HCT116 (cell line): ENCODE measurements at regions of chr12 and their contacts with region 1.

Region 1: DNA sequence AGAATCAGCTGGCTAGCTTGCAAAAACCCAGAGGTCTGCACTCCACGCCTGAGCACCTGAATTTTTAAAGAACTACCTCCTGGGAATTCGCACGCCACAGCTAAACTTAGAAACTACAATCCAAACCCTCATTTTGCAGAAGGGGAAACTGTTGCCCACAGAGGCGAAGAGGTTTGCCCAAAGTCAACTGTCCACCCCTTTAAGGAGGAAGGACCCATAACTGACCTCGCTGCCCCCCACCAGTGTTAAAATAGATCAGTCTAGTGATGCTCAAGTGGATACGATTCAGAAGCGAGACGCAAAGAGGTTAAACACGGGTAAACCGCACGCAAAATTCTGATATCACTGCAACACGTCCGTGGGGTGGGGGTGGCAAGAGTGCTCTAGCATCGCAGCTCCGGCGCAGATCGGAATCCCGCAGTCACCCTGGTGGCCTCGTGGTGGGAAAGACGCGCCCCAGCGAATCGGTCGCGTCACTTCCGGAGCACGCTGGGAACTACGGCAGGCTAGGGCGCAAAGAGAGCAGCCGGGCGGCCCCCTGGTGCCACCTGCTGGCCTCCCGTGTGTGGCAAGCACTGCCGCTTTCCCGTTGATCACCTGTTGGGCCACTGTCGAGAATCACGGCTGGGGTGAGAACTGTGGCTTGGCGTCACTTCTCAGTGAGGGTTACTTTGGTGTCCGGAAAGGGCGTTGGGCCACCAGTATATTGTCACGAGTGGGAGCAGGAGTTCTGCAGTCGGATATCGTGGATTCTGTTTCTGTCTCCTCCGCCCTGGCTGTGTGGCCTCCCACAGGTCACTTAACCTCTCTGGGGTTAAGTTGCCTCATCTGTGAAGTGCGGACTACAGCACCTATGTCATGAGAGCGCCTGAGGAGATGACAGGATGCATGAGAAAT is at the start of gene ALKBH2:
- DNase-seq: peak; percentile 88
- ATAC-seq: peak; percentile 71
- H3K4me3 ChIP-seq: peak within 1 kb of the TSS; percentile 57 to 66
- H3K27ac ChIP-seq: peak within 1 kb of the TSS; percentile 40
- H3K4me1 ChIP-seq: peaks cover 13 to 34% of the 10 kb centered on the region in 2 experiments; a peak in 3 of 4 replicates
- H3K27me3 ChIP-seq: no peaks in the 10 kb centered on the region
- CTCF ChIP-seq: peak; percentile 86 to 96 (median 89)
- POLR2A ChIP-seq: peak; percentile 97
- RAD21 ChIP-seq: peak; percentile 99
- total RNA-seq, gene ALKBH2: 35.8 TPM

Region 2: GRCh38 chr12:108664338-108665258 is 428.7 kb before region 1 on chr12:
- CTCF ChIA-PET with region 1: no interaction called
- POLR2A ChIA-PET with region 1: no interaction called
- RAD21 ChIA-PET with region 1: no interaction called
- intact Hi-C with region 1: loop called (anchors 2 kb)
- DNase-seq: peak; percentile 87
- ATAC-seq: peak; percentile 99
- H3K4me3 ChIP-seq: no peak overlapping the region
- H3K27ac ChIP-seq: peak overlapping the region; percentile 15; the same call in 1 of the 2 replicates
- H3K4me1 ChIP-seq: peaks cover 8 to 20% of the 10 kb centered on the region in 2 experiments
- H3K27me3 ChIP-seq: no peaks in the 10 kb centered on the region
- CTCF ChIP-seq: peak; percentile 87 to 94 (median 90)
- POLR2A ChIP-seq: no peak
- RAD21 ChIP-seq: peak; percentile 99

Region 3: DNA sequence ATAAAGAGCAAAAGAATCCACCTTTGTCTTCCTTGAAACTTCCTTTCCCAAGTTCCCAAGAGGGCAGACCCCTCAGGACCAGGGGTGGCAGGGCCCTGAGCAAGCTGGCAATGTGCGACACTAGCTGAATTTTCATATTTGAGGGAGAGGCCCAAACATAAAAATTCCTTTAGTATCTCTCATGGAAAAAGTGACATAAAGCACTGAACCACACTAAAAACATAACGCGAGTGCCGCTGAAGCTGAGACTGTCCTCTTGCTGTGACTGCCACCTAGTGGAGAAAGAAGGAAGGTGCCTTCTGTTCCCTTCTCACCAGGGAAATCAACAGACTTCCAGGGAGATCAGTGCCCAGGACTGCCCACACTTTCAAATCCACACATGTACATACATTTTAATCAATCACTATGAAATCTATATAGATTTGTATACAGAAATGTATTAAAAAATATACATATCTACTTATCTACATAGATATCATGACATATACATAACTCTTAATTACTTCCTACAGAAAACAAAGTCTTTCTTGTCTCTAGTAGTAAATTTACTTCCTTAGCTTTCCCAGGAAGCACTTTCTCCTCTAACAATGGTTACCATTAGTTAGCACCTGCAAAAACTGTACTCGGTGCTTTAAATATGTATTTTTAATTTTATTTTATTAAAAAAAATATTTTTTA is 289.7 kb before region 1 on chr12:
- CTCF ChIA-PET with region 1: no interaction called
- POLR2A ChIA-PET with region 1: no interaction called
- RAD21 ChIA-PET with region 1: no interaction called
- intact Hi-C with region 1: loop called (anchors 10 kb)
- DNase-seq: peak; percentile 69
- ATAC-seq: peak; percentile 88
- H3K4me3 ChIP-seq: no peak overlapping the region
- H3K27ac ChIP-seq: peak overlapping the region; percentile 12; the same call in 1 of the 2 replicates
- H3K4me1 ChIP-seq: peaks cover 6 to 11% of the 10 kb centered on the region in 2 experiments; a peak in 3 of 4 replicates
- H3K27me3 ChIP-seq: no peaks in the 10 kb centered on the region
- CTCF ChIP-seq: peak; percentile 88 to 91 (median 88)
- POLR2A ChIP-seq: no peak
- RAD21 ChIP-seq: peak; percentile 95

Region 4: DNA sequence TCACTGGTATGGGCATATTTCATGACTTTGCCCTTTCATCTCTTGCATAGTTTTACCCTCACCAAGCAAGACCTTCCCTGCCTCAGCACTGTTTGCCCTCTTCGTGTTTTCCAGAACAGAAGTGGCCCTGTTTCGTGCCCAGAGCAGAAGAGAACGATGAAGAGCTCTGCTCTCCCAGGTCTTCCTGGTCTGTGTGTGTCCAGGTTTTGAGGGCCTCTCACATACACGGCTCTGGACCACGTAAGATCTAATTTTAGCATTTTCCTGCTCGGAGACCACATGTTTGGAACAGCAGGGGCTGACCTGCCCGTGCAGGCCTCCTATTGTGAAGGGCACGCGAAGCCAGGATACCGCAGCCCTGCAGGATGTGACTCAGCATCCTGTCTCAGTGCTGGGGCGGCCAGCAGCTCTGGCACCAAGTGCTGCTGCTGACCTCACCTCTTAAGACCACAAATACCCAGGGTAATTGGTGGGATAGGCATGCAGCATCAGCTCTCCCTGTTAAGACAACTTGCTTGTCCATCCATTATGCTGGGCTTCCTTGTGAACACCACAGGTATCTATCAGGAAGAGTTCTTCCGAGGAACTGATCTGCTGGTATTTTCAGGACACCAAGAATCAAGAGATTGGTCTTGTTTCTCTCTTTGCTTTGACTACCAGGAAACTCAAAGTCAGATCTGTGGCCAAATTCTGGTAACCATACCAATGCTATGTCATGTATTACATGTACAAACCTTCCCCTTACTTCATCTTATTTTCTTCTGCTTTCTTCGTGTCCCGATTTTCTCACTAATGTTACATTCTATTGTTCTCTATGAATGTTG is 254.9 kb before region 1 on chr12:
- CTCF ChIA-PET with region 1: no interaction called
- POLR2A ChIA-PET with region 1: no interaction called
- RAD21 ChIA-PET with region 1: no interaction called
- intact Hi-C with region 1: loop called (anchors 10 kb)
- DNase-seq: peak; percentile 97
- ATAC-seq: peak; percentile 85
- H3K4me3 ChIP-seq: peak overlapping the region in 1 of 2 experiments; percentile 11; a peak in 2 of 4 replicates
- H3K27ac ChIP-seq: peak overlapping the region; percentile 99
- H3K4me1 ChIP-seq: peaks cover 78 to 95% of the 10 kb centered on the region in 2 experiments
- H3K27me3 ChIP-seq: no peaks in the 10 kb centered on the region
- CTCF ChIP-seq: no peak
- POLR2A ChIP-seq: no peak
- RAD21 ChIP-seq: no peak

Region 5: DNA sequence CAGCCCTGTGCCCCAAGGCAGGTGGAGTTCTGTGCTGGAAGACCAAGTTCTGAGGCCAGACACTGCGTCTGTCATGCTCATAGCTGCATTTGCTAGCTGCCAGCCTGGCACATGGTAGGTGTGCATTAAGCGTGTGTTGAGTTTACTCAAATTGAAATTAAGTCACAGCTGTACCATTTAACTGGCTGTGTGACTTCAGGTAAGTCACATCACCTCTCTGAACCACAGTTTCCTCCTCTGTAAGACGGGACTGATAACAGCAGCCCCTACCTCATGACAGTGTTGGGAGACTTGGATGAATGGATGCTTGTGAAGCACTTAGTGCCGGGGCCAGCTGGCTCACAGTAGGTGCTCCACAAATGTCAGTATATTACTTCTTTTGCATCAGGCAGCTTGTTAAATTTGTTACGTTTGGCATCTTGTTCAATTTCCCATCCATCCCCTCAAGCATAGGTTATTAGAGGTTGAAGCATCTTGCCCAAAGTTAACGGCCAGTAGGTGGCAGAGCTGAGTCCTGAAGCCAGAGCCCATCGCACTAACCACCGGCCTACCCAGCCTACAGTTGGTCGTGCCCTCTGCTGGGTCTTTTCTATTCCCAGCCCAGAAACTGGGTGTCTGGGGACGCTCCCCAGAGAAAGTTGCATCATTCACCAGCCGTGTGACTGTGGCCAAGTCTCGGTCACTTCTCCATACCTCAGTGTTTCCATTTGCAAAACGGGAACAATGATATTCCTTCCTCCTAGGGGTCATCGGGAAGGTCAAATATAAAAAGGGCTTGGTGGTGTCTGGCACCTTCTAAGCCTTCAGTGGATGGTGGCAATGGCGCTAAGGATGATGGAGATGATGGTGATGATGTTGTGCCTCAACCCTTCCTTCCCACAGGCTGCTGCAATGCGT is 208.9 kb before region 1 on chr12:
- CTCF ChIA-PET with region 1: no interaction called
- POLR2A ChIA-PET with region 1: no interaction called
- RAD21 ChIA-PET with region 1: no interaction called
- intact Hi-C with region 1: loop called (anchors 2 kb)
- DNase-seq: peak; percentile 39
- ATAC-seq: peak; percentile 87
- H3K4me3 ChIP-seq: no peak overlapping the region
- H3K27ac ChIP-seq: no peak overlapping the region
- H3K4me1 ChIP-seq: peaks cover 0 to 6% of the 10 kb centered on the region in 2 experiments; a peak in 1 of 4 replicates
- H3K27me3 ChIP-seq: no peaks in the 10 kb centered on the region
- CTCF ChIP-seq: peak; percentile 43 to 83 (median 81); a peak in 5 of 6 replicates
- POLR2A ChIP-seq: no peak
- RAD21 ChIP-seq: peak; percentile 49

Region 6: DNA sequence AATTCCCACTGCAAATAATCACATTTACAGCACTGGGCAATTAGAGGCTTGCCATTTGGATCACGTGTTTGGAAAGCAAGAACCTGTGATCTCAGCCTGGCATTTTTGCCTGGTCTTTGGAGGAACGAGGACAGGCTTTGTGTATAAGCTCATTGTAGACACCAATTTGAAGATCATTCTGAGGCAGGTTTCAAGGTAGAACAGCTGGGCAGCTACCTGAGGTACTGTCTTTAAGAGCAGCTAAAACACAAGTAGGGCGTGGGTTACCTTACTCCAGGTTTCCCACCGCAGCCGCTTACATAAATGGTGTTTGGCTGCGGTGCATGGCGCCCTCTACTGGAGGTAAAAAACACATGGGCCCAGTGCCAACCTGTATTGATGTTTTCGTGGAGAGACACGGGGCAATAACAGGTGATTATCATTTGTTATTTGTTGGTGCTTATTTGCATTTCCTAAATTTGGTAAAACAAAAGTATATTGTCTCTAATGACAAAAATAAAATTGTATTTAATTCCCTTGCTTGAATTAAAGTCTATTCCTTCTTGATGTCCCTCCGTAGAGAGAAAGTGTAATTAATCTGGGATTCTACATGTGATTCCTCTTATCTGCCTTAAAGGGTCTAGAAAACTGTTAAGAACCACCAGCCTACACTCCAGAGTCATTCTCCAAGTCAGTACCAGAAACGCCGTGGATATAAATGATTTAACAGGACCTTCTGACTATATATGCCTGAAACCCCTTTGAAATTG is 142.1 kb before region 1 on chr12:
- CTCF ChIA-PET with region 1: no interaction called
- POLR2A ChIA-PET with region 1: no interaction called
- RAD21 ChIA-PET with region 1: no interaction called
- intact Hi-C with region 1: loop called (anchors 10 kb)
- DNase-seq: peak; percentile 70
- ATAC-seq: peak; percentile 85
- H3K4me3 ChIP-seq: peak overlapping the region; percentile 2 to 27; a peak in 2 of 4 replicates
- H3K27ac ChIP-seq: no peak overlapping the region
- H3K4me1 ChIP-seq: peaks cover 0 to 9% of the 10 kb centered on the region in 2 experiments; a peak in 2 of 4 replicates
- H3K27me3 ChIP-seq: no peaks in the 10 kb centered on the region
- CTCF ChIP-seq: peak; percentile 77 to 95 (median 86)
- POLR2A ChIP-seq: no peak
- RAD21 ChIP-seq: peak; percentile 96